ENCODE measurements at regions of chr17 and their contacts with region 1.

Region 1: GRCh38 chr17:42843358-42843934 is 934 bp upstream of the AOC2 start:
- H3K4me3 ChIP-seq: no peak overlapping the region
- H3K27ac ChIP-seq: no peak overlapping the region
- H3K4me1 ChIP-seq: no peaks in the 10 kb centered on the region
- CTCF ChIP-seq: peak; percentile 89

Region 2: GRCh38 chr17:42832974-42833766 is 10.3 kb before region 1 on chr17 and contains the start of gene PSME3:
- CTCF ChIA-PET with region 1: interaction called, 22 read pairs
- POLR2A ChIA-PET with region 1: interaction called, 18 read pairs
- H3K4me3 ChIP-seq: peak within 1 kb of the TSS; percentile 86
- H3K27ac ChIP-seq: peak within 1 kb of the TSS; percentile 83
- H3K4me1 ChIP-seq: peaks cover 5% of the 10 kb centered on the region
- CTCF ChIP-seq: no peak; the same call in 1 of the 2 replicates

Region 3: GRCh38 chr17:42920922-42921321 is 77.5 kb after region 1 on chr17:
- CTCF ChIA-PET with region 1: interaction called, 10 read pairs
- POLR2A ChIA-PET with region 1: no interaction called
- H3K4me3 ChIP-seq: no peak overlapping the region
- H3K27ac ChIP-seq: no peak overlapping the region
- H3K4me1 ChIP-seq: peaks cover 11% of the 10 kb centered on the region
- CTCF ChIP-seq: no peak

Region 4: GRCh38 chr17:42928714-42929496 is 85.5 kb after region 1 on chr17:
- CTCF ChIA-PET with region 1: interaction called, 47 read pairs
- POLR2A ChIA-PET with region 1: interaction called, 4 read pairs
- H3K4me3 ChIP-seq: no peak overlapping the region
- H3K27ac ChIP-seq: peak overlapping the region; percentile 36; the same call in 1 of the 2 replicates
- H3K4me1 ChIP-seq: no peaks in the 10 kb centered on the region
- CTCF ChIP-seq: no peak

Region 5: DNA sequence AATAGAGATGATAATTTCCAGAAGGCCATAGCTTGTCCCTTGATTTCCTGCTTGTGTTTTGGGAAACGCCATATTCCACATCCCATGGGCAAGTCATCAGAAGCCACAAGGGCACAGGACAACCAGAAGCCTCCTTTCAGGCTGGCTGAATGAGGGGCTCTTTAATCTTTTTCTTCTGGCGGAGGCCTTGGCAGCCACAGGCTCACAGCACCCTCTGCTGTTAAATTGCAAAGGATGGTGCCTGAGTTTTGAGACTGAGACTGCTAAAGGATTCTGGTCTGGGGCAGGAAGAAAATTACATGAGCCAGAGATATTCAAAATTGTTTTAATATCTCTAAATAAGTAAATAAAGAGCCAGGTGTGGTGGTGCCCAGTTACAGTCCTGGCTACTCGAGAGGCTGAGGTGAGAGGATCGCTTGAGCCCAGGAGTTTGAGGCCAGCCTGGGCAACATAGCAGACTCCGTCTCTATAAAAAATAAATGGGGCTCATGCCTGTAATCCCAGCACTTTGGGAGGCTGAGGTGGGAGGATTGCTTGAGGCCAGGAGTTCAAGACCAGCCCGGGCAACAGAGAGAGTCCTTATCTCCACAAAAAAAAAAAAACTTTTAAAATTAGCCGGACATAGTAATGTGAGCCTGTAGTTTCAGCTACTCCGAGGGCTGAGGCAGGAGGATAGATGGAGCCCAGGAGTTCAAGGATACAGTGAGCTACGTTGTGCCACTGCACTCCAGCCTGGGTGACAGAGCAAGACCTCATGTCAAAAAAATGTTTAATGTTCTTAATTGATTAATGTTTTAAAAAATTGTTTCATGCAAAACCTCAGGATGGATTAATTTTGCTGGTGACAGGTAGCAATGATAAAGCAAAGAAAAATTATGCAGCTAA is 94.5 kb after region 1 on chr17:
- CTCF ChIA-PET with region 1: interaction called, 81 read pairs
- POLR2A ChIA-PET with region 1: no interaction called
- H3K4me3 ChIP-seq: no peak overlapping the region
- H3K27ac ChIP-seq: no peak overlapping the region
- H3K4me1 ChIP-seq: no peaks in the 10 kb centered on the region
- CTCF ChIP-seq: peak; percentile 66

Region 6: GRCh38 chr17:43042025-43042628 is 198.7 kb after region 1 on chr17:
- CTCF ChIA-PET with region 1: no interaction called
- POLR2A ChIA-PET with region 1: no interaction called
- H3K4me3 ChIP-seq: no peak overlapping the region
- H3K27ac ChIP-seq: no peak overlapping the region
- H3K4me1 ChIP-seq: no peaks in the 10 kb centered on the region
- CTCF ChIP-seq: no peak

Measured in HEK293 (cell line).